ENCODE measurements at regions of chr21 and their contacts with region 1.

Region 1: DNA sequence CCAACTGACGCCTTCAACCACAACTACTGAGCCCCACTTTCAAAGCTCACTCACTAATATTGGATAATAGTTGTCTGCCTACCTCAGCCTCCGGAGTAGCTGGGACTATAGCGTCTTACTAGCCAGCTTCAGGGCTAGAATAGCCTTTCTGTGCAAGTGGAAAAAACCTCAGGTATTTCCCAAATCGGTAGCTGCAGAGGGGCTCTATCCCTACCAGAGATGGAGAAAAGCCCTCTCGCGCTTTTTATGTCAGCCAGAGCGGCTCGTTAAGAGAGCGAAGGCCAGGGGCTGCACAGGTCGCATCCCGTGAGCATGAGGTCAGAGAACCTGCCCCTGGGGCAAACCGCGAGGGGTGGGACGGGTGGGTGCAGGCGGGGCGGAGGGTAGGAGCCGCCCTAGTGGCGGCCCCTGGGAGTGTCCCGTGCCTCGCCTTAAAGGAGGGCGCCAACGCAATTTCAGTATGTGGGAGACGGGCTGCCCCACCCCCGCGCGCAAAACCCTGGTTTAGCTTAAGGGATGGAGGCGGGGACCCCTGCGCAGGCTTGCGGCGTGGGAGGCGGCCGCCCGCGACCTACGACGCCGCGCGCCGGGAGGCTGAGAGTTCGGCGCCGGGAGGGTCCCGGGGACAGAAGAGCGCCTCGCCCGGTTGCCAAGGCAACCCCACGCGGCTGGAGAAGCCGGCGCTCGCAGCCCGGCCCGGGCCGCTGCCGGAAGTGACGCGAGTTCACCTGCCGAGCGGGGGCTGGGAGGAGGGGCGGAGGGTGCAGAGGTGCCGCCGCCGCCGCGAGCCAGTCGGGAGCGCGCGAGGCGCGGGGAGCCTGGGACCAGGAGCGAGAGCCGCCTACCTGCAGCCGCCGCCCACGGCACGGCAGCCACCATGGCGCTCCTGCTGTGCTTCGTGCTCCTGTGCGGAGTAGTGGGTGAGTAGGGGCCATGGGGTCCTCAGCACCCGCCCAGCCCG is at the start of gene CXADR:
- DNase-seq: peak; percentile 74
- ATAC-seq: peak; percentile 91 to 94
- total RNA-seq, gene CXADR: 9.8 to 14.5 TPM

Region 2: DNA sequence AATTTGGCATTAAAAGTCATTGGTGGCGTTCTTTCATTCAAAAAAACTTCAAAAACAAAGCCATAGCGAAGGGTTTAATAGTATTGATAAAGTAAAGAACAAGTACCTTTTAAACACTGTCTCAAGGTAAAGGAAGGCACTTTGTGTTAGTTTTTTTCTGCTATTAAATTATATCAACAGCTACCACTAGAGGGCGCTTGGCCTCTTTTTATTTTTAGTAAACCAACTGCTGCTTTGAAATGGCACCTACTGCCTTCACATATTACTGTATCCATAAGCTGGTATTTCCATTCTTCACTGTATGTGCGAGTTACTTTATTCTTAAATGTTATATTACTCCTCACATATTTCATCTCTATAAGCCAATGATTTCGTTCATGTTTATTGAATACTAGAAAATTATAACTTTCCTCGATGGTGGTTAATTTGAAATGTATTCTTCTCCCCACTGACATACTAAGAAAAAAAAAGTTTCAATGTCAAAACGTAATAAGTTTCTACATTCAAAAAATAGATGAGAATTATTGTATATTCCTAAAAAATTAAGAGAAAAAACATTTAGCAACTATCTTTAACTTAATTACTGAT is 125.4 kb before region 1 on chr21:
- intact Hi-C with region 1: loop called in 1 of 2 experiments (anchors 5 kb)
- DNase-seq: peak; percentile 28
- ATAC-seq: peak in 1 of 2 donors; percentile 49

Region 3: DNA sequence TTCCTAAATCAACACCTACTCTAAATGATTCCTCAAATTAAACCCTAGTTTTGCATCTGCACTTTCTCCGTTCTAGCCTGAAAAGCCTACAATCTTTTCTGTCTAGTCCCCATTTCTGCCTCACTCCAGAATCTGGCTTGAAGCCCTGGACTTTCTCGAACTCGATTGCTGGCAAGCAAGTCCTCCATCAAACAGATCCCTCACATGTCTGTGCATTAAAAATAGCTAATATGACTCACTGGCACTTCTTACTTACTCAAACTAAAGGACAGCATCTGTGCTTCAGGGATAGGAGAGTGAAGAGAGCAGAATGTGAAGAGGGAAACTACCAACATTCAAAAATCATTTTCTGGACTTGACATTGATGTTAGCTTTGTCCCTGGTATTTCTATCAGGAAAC is 51.5 kb before region 1 on chr21:
- intact Hi-C with region 1: loop called in 1 of 2 experiments (anchors 5 kb)
- DNase-seq: peak; percentile 44
- ATAC-seq: peak; percentile 90 to 93

Region 4: GRCh38 chr21:17476006-17476405 is 36.5 kb before region 1 on chr21:
- intact Hi-C with region 1: no loop called
- DNase-seq: no peak
- ATAC-seq: peak; percentile 64 to 73

Region 5: GRCh38 chr21:17585875-17586450 is 73.4 kb after region 1 on chr21:
- intact Hi-C with region 1: loop called in 1 of 2 experiments (anchors 10 kb)
- DNase-seq: no peak
- ATAC-seq: peak in 1 of 2 donors; percentile 24